CD4-positive, alpha-beta memory T cell (primary cell): ENCODE measurements at regions of chr10 and their contacts with region 1.

Region 1: DNA sequence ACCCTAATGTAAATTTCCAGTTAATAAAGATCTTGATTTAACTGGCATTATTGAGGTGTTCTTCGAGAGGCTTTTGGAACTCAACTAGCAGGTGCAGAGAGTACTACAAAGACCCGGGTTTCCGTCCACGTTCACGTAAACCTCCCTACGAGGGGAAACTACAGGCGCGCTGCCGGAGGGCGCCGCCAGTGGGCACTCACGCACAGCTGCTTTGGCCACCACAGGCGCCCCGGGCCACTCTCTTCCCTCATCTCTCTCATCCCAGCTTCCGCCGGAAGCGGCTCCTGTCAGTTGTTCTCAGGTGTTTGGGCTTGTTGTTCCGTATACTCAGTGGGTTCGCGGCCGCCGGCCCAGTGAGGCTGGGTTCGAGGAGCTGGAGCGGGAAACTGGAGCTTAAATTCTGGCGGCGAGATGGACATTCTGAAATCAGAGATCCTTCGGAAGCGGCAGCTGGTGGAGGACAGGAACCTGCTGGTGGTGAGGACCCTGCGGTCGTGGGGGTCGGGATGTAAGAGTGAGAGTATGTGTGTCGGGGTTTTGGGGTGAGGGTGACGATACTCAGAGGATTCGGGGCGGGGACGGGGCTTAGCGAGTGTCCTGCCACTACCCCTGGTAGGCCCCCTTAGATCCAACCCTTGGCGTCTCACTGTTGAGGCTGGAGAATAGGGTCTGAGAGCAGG is at the start of gene PRPF18:
- DNase-seq: peak; percentile 91 to 95 (median 92)
- H3K4me3 ChIP-seq: peak within 1 kb of the TSS; percentile 88 to 95
- H3K4me3 Mint-ChIP-seq: peak within 1 kb of the TSS; percentile 98 to 100 (median 100)
- H3K27ac ChIP-seq: peak within 1 kb of the TSS; percentile 65
- H3K27ac Mint-ChIP-seq: peak within 1 kb of the TSS; percentile 72 to 100 (median 100)
- H3K4me1 ChIP-seq: peaks cover 24% of the 10 kb centered on the region
- H3K4me1 Mint-ChIP-seq: peaks cover 24 to 49% (median 34%) of the 10 kb centered on the region in 4 donors
- H3K27me3 ChIP-seq: no peaks in the 10 kb centered on the region
- H3K27me3 Mint-ChIP-seq: peaks cover 11 to 21% of the 10 kb centered on the region in 2 donors
- total RNA-seq, gene PRPF18: 30.3 TPM

Region 2: GRCh38 chr10:13299437-13300287 is 287.2 kb before region 1 on chr10 and contains the start of gene PHYH:
- CTCF ChIA-PET with region 1: no interaction called
- POLR2A ChIA-PET with region 1: interaction called, 5 read pairs
- intact Hi-C with region 1: loop called (anchors 1 kb)
- DNase-seq: peak; percentile 80 to 86 (median 82)
- H3K4me3 ChIP-seq: peak within 1 kb of the TSS; percentile 36 to 57
- H3K4me3 Mint-ChIP-seq: peak within 1 kb of the TSS; percentile 85 to 90 (median 86)
- H3K27ac ChIP-seq: peak within 1 kb of the TSS; percentile 88
- H3K27ac Mint-ChIP-seq: peak within 1 kb of the TSS; percentile 88 to 100 (median 96)
- H3K4me1 ChIP-seq: peaks cover 28% of the 10 kb centered on the region
- H3K4me1 Mint-ChIP-seq: peaks cover 8 to 30% (median 20%) of the 10 kb centered on the region in 4 donors
- H3K27me3 ChIP-seq: no peaks in the 10 kb centered on the region
- H3K27me3 Mint-ChIP-seq: no peaks in the 10 kb centered on the region
- total RNA-seq, gene PHYH: 8.7 to 10.2 TPM

Region 3: GRCh38 chr10:13356392-13356791 is 230.4 kb before region 1 on chr10:
- CTCF ChIA-PET with region 1: no interaction called
- POLR2A ChIA-PET with region 1: no interaction called
- intact Hi-C with region 1: no loop called
- DNase-seq: no peak
- H3K4me3 ChIP-seq: no peak overlapping the region
- H3K4me3 Mint-ChIP-seq: peak overlapping the region in 1 of 8 donors; percentile 60
- H3K27ac ChIP-seq: no peak overlapping the region
- H3K27ac Mint-ChIP-seq: peak overlapping the region in 1 of 7 donors; percentile 33
- H3K4me1 ChIP-seq: peaks cover 8% of the 10 kb centered on the region
- H3K4me1 Mint-ChIP-seq: peaks cover 9 to 15% (median 11%) of the 10 kb centered on the region in 4 donors
- H3K27me3 ChIP-seq: no peaks in the 10 kb centered on the region
- H3K27me3 Mint-ChIP-seq: peaks cover 5 to 11% of the 10 kb centered on the region in 2 donors

Region 4: DNA sequence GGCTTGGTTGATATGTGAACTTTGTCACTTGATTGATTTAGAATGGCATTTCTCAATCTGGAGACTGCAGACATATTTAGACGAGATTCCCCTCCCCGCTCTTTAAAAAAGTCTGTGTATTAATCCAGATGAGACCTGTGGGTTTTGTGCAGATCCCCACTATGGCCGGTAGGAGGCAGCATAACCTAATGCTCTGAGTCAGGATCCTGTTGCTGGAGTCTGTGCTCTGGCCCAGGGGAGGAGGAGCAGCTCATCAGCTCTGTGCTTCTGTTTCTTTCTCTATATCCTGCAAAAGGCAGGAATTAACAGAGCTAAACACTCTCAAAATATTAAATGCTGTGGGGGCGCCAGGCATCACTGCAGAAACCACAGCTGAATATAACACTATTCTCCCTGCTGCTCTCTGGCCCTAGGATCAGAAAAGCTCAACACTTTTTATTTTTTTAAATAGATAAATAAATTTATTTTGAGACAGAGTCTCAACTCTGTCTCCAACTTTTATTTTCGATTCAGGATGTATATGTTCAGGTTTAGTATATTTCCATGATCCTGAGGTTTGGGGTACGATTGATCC is 214.8 kb before region 1 on chr10:
- CTCF ChIA-PET with region 1: no interaction called
- POLR2A ChIA-PET with region 1: no interaction called
- intact Hi-C with region 1: loop called (anchors 1 kb)
- DNase-seq: peak; percentile 70 to 77 (median 72)
- H3K4me3 ChIP-seq: no peak overlapping the region
- H3K4me3 Mint-ChIP-seq: no peak overlapping the region
- H3K27ac ChIP-seq: no peak overlapping the region
- H3K27ac Mint-ChIP-seq: peak overlapping the region in 1 of 7 donors; percentile 18
- H3K4me1 ChIP-seq: no peaks in the 10 kb centered on the region
- H3K4me1 Mint-ChIP-seq: peaks cover 0 to 1% (median 0%) of the 10 kb centered on the region in 4 donors
- H3K27me3 ChIP-seq: no peaks in the 10 kb centered on the region
- H3K27me3 Mint-ChIP-seq: peaks cover 0 to 2% of the 10 kb centered on the region in 2 donors

Region 5: GRCh38 chr10:13550802-13551201 is 36.0 kb before region 1 on chr10:
- CTCF ChIA-PET with region 1: no interaction called
- POLR2A ChIA-PET with region 1: no interaction called
- intact Hi-C with region 1: no loop called
- DNase-seq: no peak
- H3K4me3 ChIP-seq: no peak overlapping the region
- H3K4me3 Mint-ChIP-seq: no peak overlapping the region
- H3K27ac ChIP-seq: no peak overlapping the region
- H3K27ac Mint-ChIP-seq: no peak overlapping the region
- H3K4me1 ChIP-seq: no peaks in the 10 kb centered on the region
- H3K4me1 Mint-ChIP-seq: no peaks in the 10 kb centered on the region
- H3K27me3 ChIP-seq: no peaks in the 10 kb centered on the region
- H3K27me3 Mint-ChIP-seq: peaks cover 15 to 24% of the 10 kb centered on the region in 2 donors

Region 6: DNA sequence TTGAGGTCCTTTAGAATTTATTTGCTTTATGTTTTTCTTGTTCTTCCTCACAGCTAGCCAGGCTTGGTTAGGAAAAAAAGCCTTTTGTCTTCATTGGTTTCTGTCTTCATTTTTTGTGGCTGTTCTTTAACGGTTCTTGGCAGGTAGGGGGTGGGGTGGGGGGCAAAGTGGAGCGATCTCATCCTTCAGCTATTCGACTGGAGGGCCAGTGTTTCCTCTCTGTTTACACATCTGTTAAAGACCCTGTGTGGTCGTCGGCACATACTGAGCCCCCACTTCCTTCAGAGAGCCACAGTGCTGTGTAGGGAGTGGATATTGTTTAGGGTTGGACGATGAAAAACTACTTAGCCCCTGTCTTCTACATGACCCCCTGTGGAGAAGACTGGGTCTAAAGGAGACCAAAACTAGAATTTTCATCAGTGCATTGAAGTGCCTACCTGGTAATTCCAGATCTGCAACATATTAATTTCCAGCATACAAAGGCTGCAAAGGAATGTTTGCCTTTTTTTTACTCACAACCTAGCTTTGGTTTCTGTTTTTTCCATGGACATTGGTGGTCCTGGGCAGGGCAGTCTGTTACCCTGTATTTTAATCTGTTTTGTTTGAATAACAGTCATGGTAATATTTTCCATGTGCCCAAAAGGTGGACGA is 29.0 kb after region 1 on chr10:
- CTCF ChIA-PET with region 1: no interaction called
- POLR2A ChIA-PET with region 1: no interaction called
- intact Hi-C with region 1: no loop called
- DNase-seq: no peak
- H3K4me3 ChIP-seq: no peak overlapping the region
- H3K4me3 Mint-ChIP-seq: no peak overlapping the region
- H3K27ac ChIP-seq: no peak overlapping the region
- H3K27ac Mint-ChIP-seq: peak overlapping the region in 1 of 7 donors; percentile 21
- H3K4me1 ChIP-seq: no peaks in the 10 kb centered on the region
- H3K4me1 Mint-ChIP-seq: no peaks in the 10 kb centered on the region
- H3K27me3 ChIP-seq: no peaks in the 10 kb centered on the region
- H3K27me3 Mint-ChIP-seq: no peaks in the 10 kb centered on the region

Region 7: GRCh38 chr10:13787015-13787421 is 200.2 kb after region 1 on chr10:
- CTCF ChIA-PET with region 1: interaction called, 5 read pairs
- POLR2A ChIA-PET with region 1: interaction called, 5 read pairs
- intact Hi-C with region 1: loop called (anchors 1 kb)
- DNase-seq: peak; percentile 87 to 94 (median 91)
- H3K4me3 ChIP-seq: peak overlapping the region in 1 of 2 donors; percentile 32
- H3K4me3 Mint-ChIP-seq: peak overlapping the region; percentile 65 to 91 (median 81)
- H3K27ac ChIP-seq: peak overlapping the region; percentile 91
- H3K27ac Mint-ChIP-seq: no peak overlapping the region
- H3K4me1 ChIP-seq: peaks cover 51% of the 10 kb centered on the region
- H3K4me1 Mint-ChIP-seq: peaks cover 10 to 34% (median 25%) of the 10 kb centered on the region in 4 donors
- H3K27me3 ChIP-seq: no peaks in the 10 kb centered on the region
- H3K27me3 Mint-ChIP-seq: no peaks in the 10 kb centered on the region

Region 8: DNA sequence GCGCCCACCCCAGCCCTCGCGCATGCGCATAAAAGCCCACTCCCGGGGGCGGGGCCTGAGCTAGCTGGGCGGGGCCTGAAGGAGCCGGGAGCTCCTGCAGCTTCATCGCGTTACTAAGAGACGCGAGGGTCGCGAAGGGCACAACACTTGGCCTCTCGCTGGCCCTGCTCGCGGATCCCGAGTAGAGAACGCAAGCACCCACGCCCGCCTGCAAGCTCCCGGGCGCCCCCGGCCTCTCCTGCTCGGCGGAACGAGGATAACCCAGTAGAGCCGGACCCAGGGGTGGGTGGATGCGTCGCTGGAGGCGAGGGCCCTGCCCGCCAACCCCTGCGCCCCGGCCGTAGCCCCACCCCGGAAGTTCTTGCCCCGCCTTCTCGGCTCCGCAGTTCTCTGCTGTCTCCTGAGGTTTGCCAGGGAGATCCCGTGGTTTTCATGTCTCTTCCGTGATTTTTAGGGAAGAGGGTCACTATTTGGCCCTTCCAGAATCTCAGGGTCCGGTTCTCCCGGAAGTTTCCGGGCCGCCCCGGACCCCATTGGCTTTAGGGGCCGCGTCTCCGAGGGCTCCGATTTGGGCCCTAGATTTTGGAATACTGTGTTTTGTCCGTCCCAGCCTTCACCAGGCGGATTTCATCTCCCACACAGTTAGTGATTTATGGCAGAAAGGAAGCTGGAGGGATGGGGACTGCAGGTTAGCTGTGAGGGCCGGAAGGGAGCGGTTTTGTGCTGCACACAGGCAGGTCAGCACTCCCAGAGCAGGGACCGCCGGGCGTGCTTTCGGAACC is 1372.7 kb after region 1 on chr10 and contains the start of gene MEIG1:
- CTCF ChIA-PET with region 1: no interaction called
- POLR2A ChIA-PET with region 1: no interaction called
- intact Hi-C with region 1: loop called (anchors 10 kb)
- DNase-seq: peak; percentile 87 to 92 (median 88)
- H3K4me3 ChIP-seq: peak within 1 kb of the TSS; percentile 79 to 98
- H3K4me3 Mint-ChIP-seq: peak within 1 kb of the TSS; percentile 93 to 99 (median 96)
- H3K27ac ChIP-seq: peak within 1 kb of the TSS; percentile 92
- H3K27ac Mint-ChIP-seq: peak within 1 kb of the TSS; percentile 93 to 99 (median 96)
- H3K4me1 ChIP-seq: peaks cover 14% of the 10 kb centered on the region
- H3K4me1 Mint-ChIP-seq: peaks cover 20 to 40% (median 29%) of the 10 kb centered on the region in 4 donors
- H3K27me3 ChIP-seq: no peaks in the 10 kb centered on the region
- H3K27me3 Mint-ChIP-seq: no peaks in the 10 kb centered on the region
- total RNA-seq, gene MEIG1: not detected